H1 (cell line): ENCODE measurements at regions of chr11 and their contacts with region 1.

Region 1: DNA sequence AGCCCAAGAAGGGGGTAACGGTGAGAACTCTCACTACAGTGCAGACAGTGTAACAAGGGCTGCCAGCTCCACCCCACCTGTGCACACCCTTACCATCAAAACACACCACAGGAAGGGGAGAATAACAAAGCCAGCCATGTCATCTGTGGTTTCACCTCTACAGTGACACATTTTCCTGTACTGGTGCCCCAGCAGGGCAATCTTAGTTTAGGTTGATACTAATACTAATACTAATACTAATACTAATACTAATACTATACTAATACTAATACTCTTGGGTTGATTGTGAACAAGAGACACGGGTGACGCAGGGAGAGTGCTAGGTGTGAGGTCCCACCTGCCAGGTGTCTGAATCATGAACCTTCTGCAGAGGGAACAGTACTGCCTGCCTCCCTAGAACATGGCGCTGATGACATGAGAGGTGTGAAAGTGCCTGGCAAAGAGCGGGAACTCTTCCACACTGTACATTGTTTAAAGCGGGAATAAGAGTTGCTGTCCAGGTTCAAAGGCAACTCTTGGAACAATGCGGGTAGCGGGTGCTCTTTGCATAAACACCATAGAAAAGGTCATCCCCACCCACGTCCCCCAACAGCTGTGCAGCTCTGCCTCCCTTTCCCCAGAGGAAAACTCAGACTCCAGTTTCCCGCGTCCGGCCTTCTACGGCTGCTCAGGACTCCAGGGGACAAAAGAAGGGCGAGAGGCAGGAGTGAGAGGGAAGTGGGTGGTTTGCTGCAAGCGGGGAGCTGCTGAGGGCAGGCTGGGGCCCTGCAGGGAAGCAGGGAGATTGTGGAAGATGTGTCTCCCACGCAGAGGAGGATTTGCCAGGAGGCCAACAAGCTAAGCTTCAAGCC is 25.0 kb upstream of the TMPRSS4 start:
- DNase-seq: no peak
- H3K4me3 ChIP-seq: no peak overlapping the region
- H3K27ac ChIP-seq: no peak overlapping the region
- H3K4me1 ChIP-seq: no peaks in the 10 kb centered on the region; a peak in 1 of 7 replicates
- H3K27me3 ChIP-seq: no peaks in the 10 kb centered on the region
- CTCF ChIP-seq: no peak
- EP300 ChIP-seq: no peak
- POLR2A ChIP-seq: no peak
- RAD21 ChIP-seq: no peak

Region 2: DNA sequence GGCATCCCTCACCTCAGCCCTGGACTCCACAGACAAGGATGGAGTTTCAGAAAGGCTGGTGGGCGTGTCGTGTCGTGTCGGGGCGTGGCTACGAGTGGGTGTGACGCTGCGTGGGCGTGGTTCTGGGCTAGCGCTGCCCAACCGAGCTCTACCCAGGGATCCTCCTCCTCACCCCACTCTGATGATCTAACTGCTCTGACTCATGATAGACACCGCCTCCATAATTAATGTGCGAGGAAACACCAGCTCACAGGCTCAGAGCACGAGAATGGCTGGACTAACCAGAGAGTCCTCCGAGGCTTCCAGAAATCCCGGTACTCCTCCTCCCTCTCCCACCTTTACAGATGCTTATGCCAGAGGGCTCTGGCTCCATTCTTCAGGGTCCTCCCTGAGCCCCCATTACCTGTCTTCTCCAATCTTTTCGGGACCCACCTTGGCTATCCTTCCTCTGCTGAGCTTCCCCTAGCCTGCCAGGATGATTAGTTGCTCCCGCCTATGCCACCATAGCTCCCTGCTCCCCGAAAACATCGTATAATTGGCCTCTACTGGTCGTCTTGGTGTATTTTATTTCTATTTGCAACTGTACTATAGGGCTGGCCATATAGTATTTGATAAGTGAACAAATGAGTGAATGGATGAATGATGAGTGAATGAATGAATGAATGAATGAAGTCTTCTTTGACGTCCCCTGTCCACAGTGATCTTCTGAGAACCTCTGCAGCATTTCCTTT is 144.4 kb before region 1 on chr11:
- CTCF ChIA-PET with region 1: interaction called, 11 read pairs
- POLR2A ChIA-PET with region 1: no interaction called
- DNase-seq: peak; percentile 64 to 92
- H3K4me3 ChIP-seq: peak overlapping the region; percentile 2 to 34 (median 12); a peak in 4 of 8 replicates
- H3K27ac ChIP-seq: no peak overlapping the region
- H3K4me1 ChIP-seq: peaks cover 0 to 12% (median 3%) of the 10 kb centered on the region in 4 experiments; a peak in 5 of 7 replicates
- H3K27me3 ChIP-seq: no peaks in the 10 kb centered on the region
- CTCF ChIP-seq: no peak
- EP300 ChIP-seq: no peak
- POLR2A ChIP-seq: no peak
- RAD21 ChIP-seq: no peak

Region 3: GRCh38 chr11:117932067-117932370 is 119.8 kb before region 1 on chr11:
- CTCF ChIA-PET with region 1: interaction called, 18 read pairs
- POLR2A ChIA-PET with region 1: no interaction called
- DNase-seq: no peak
- H3K4me3 ChIP-seq: no peak overlapping the region
- H3K27ac ChIP-seq: no peak overlapping the region
- H3K4me1 ChIP-seq: peaks cover 0 to 10% (median 5%) of the 10 kb centered on the region in 4 experiments; a peak in 6 of 7 replicates
- H3K27me3 ChIP-seq: no peaks in the 10 kb centered on the region; a peak in 1 of 7 replicates
- CTCF ChIP-seq: no peak
- EP300 ChIP-seq: no peak
- POLR2A ChIP-seq: no peak
- RAD21 ChIP-seq: no peak

Region 4: DNA sequence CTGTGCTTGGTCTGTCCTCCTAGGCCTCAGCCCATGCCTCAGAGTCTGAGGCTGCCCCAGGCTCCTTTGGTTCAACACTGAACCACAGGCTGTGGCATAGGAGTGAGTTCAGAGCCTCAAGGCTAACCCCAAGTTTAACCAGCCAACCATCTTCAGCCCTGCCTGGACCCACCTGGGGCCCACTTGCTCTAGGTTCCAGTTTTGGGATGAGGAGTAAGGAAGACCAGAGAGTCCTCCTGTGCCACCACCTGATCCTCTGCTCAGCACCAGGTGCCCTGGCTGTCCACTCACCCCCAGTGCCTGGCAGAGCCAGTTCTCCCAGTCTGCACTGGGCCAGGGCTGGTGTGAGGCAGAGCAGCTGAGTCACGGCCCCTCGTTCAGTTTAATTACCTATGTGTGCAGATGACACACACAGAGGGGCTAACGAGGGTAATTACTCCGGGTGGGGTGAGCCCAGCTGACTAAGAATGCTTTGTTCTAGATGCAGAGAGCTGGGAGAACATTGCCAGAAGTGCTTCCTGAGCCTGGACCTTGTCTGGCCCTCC is 110.6 kb before region 1 on chr11:
- CTCF ChIA-PET with region 1: interaction called, 134 read pairs
- POLR2A ChIA-PET with region 1: no interaction called
- DNase-seq: no peak
- H3K4me3 ChIP-seq: no peak overlapping the region
- H3K27ac ChIP-seq: no peak overlapping the region
- H3K4me1 ChIP-seq: no peaks in the 10 kb centered on the region
- H3K27me3 ChIP-seq: no peaks in the 10 kb centered on the region; a peak in 1 of 7 replicates
- CTCF ChIP-seq: no peak
- EP300 ChIP-seq: no peak
- POLR2A ChIP-seq: no peak
- RAD21 ChIP-seq: no peak

Region 5: DNA sequence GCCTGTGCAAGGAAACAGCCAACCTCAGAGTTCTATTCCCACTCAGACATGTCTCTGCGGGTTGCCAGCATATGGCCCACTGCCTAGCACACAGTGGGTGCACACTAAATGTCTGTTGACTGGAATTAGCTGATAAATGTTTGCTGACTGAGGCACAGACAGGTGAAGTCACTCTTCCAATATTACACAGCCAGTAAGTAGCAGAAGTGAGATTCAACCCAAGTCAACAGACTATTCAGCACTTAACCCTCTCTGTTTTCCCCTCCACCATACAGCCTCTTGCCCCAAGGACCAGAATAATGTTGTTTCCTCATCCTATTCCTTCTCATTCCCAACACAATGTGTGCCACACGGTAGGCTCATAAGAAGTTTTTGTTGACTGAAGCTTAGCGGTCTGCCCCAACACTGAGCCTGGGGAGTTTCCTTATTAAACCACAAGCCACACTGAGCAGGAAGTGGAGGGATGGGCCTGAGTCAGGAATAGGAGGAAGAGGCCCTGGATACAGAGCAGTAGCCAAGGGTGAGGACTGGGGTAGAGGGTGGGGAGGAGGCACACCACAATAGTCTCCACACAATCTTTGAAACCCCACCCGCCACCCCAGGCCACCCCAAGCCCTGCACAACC is 81.3 kb before region 1 on chr11:
- CTCF ChIA-PET with region 1: no interaction called
- POLR2A ChIA-PET with region 1: no interaction called
- DNase-seq: no peak
- H3K4me3 ChIP-seq: no peak overlapping the region
- H3K27ac ChIP-seq: no peak overlapping the region
- H3K4me1 ChIP-seq: no peaks in the 10 kb centered on the region
- H3K27me3 ChIP-seq: peaks cover 0 to 2% (median 0%) of the 10 kb centered on the region in 4 experiments; a peak in 1 of 7 replicates
- CTCF ChIP-seq: no peak
- EP300 ChIP-seq: no peak
- POLR2A ChIP-seq: no peak
- RAD21 ChIP-seq: no peak

Region 6: DNA sequence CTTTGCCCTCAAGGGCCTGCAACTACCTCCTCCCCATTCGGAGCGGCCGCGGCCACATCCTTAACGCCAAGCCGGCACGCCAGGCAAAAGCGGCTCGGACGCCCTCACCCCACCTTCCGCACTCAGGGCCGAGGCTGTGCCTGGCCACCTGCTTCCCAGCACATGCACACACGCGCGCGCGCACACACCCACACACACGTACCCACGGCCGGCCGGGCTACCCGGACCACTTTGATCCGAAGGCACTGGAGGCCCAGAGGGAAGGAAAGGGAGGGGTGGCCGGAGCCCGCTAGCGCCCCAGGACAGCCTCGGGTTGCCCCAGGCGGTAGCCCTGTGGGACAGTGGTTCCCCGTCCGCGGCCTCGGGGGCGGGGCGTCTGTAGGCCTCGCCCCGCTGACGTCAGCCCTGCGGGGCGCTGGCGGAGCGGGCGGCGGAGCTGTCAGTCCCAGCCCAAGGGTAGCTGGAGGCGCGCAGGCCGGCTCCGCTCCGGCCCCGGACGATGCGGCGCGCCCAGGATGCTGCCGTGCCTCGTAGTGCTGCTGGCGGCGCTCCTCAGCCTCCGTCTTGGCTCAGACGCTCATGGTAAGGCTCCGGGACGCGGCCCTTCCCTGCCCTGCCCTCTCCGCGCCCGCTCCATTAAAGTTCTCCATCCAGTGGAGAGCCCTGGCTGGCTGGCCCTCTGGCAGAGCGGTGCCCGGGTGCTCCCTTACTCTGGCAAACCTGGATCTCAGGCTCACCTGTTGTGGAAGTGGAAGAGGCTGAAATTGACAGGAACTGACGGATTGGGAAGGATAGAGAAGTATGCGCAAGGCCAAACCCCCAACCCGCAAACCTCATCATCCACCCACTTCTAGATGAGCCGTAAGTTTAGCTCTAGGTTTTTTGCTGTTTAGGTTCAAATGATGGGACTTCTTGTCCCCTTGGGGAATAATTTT is 65.6 kb before region 1 on chr11 and contains the start of gene IL10RA:
- CTCF ChIA-PET with region 1: interaction called, 14 read pairs
- POLR2A ChIA-PET with region 1: interaction called, 3 read pairs
- DNase-seq: peak; percentile 64 to 93
- H3K4me3 ChIP-seq: peak within 1 kb of the TSS; percentile 44 to 64 (median 49)
- H3K27ac ChIP-seq: no peak within 1 kb of the TSS
- H3K4me1 ChIP-seq: peaks cover 0 to 3% (median 1%) of the 10 kb centered on the region in 4 experiments; a peak in 3 of 7 replicates
- H3K27me3 ChIP-seq: peaks cover 16 to 30% (median 22%) of the 10 kb centered on the region in 4 experiments
- CTCF ChIP-seq: no peak
- EP300 ChIP-seq: no peak
- POLR2A ChIP-seq: peak in 1 of 2 experiments; percentile 41; a peak in 1 of 3 replicates
- RAD21 ChIP-seq: 0 out of 4 replicates have a peak, but pooled peaks of 1 of the 2 experiments have one; percentile 0
- total RNA-seq, gene IL10RA: 0.11 and 0.31 TPM in 2 replicates

Region 7: GRCh38 chr11:118002541-118003423 is 49.1 kb before region 1 on chr11:
- CTCF ChIA-PET with region 1: interaction called, 18 read pairs
- POLR2A ChIA-PET with region 1: no interaction called
- DNase-seq: no peak
- H3K4me3 ChIP-seq: no peak overlapping the region
- H3K27ac ChIP-seq: no peak overlapping the region
- H3K4me1 ChIP-seq: no peaks in the 10 kb centered on the region; a peak in 2 of 7 replicates
- H3K27me3 ChIP-seq: peaks cover 0 to 2% (median 0%) of the 10 kb centered on the region in 4 experiments; a peak in 1 of 7 replicates
- CTCF ChIP-seq: no peak
- EP300 ChIP-seq: no peak
- POLR2A ChIP-seq: no peak
- RAD21 ChIP-seq: no peak

Region 8: GRCh38 chr11:118033443-118033842 is 18.4 kb before region 1 on chr11:
- CTCF ChIA-PET with region 1: interaction called, 11 read pairs
- POLR2A ChIA-PET with region 1: no interaction called
- DNase-seq: no peak
- H3K4me3 ChIP-seq: no peak overlapping the region
- H3K27ac ChIP-seq: no peak overlapping the region
- H3K4me1 ChIP-seq: no peaks in the 10 kb centered on the region
- H3K27me3 ChIP-seq: no peaks in the 10 kb centered on the region
- CTCF ChIP-seq: no peak
- EP300 ChIP-seq: no peak
- POLR2A ChIP-seq: no peak
- RAD21 ChIP-seq: no peak